Gastrocnemius medialis (tissue), 4 donors: ENCODE measurements at regions of chr3 and their contacts with region 1.

Region 1: DNA sequence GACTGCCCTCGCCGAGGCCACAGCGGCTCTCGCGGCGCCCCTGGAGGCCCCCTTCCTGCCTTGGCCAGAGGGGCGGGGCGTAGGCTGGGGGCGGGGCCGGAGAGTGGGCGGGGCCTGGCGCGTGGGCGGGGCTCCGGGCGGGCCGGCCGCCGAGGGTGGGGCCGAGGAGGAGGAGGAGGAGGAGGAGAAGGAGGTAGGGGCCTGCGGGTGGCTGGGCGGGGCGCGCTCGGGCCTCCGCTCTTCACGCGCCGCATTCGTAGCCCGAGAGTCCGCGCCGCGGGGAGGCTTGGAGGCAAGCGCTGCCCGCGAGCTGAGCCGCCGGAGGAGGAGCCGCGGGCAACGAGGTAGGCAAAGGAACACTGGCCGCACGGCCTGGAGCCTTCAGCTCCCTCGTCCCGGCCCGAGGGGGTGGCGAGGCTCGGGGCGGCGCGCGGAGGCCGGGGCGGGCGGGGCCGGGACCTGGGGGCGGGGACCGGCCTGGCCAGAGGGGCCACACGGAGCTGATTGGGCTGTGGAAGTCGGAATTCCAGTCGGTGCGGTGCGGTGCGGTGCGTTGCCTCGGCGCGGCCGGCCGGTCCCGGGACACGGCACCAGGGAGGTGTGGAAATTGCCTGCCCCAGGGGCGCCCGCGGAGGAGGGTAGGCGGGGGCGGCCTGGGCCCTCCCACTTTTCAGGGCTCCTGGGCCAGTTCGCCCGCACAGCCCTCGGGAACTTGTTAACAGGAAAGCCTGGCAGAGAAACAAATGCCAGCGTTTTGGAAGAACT is at the start of gene PPP2R3A:
- DNase-seq: peak; percentile 77 to 86
- ATAC-seq: peak; percentile 78 to 82
- H3K4me3 ChIP-seq: peak within 1 kb of the TSS; percentile 65 to 90 (median 85)
- H3K27ac ChIP-seq: peak within 1 kb of the TSS; percentile 82 to 98 (median 96)
- H3K4me1 ChIP-seq: peaks cover 39 to 51% of the 10 kb centered on the region in 2 donors
- H3K27me3 ChIP-seq: no peaks in the 10 kb centered on the region
- CTCF ChIP-seq: no peak
- POLR2A ChIP-seq: peak; percentile 79 to 80
- total RNA-seq, gene PPP2R3A: 16.8 to 30.3 (median 25.6) TPM

Region 2: GRCh38 chr3:135136361-135137100 is 829.2 kb before region 1 on chr3:
- in situ Hi-C with region 1: no loop called
- intact Hi-C with region 1: loop called (anchors 5 kb)
- DNase-seq: peak; percentile 80
- ATAC-seq: peak; percentile 98
- H3K4me3 ChIP-seq: no peak overlapping the region
- H3K27ac ChIP-seq: peak overlapping the region; percentile 78 to 88 (median 82)
- H3K4me1 ChIP-seq: peaks cover 29 to 31% of the 10 kb centered on the region in 2 donors
- H3K27me3 ChIP-seq: no peaks in the 10 kb centered on the region
- CTCF ChIP-seq: no peak
- POLR2A ChIP-seq: no peak

Region 3: DNA sequence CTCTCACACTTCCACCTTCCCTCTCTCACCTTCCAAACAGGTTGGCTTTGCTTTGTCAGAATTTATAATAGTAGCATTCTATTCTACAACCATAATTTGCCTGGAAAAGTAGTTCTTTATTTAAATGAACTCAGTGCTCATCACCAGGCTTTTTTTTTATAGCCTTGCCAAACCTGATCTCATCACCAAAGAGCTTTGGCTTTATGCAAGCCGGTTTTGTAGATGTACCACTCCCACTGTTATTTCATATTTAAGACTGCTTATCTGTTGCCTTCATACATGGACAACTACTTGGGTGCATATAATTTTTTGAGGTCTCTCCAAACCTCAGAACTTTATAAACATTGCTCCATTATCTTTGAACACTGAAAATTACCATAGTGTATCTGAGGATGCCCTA is 246.2 kb before region 1 on chr3:
- in situ Hi-C with region 1: no loop called
- intact Hi-C with region 1: no loop called
- DNase-seq: no peak
- ATAC-seq: no peak
- H3K4me3 ChIP-seq: no peak overlapping the region
- H3K27ac ChIP-seq: no peak overlapping the region
- H3K4me1 ChIP-seq: no peaks in the 10 kb centered on the region
- H3K27me3 ChIP-seq: no peaks in the 10 kb centered on the region
- CTCF ChIP-seq: no peak
- POLR2A ChIP-seq: no peak

Region 4: DNA sequence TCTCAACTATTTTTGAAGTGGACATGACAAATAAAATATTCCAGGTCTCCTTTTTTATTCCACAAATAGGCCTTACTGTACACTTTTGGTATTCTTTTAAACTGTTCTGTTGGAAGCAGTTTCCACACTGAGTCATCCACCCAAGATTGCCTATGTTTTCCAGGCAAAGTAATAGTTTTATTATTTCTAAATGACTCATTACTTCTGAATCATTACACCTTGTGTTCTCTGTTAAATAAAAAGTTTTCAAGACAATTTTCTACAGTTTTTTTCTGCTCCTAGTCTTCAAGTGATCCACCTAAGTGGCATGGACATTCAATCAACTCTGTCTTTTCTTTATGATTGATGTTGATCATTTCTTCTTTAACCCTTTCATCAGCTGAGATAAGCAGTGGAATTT is 26.4 kb after region 1 on chr3:
- in situ Hi-C with region 1: no loop called
- intact Hi-C with region 1: loop called (anchors 2 kb)
- DNase-seq: no peak
- ATAC-seq: peak in 1 of 2 donors; percentile 62
- H3K4me3 ChIP-seq: no peak overlapping the region
- H3K27ac ChIP-seq: peak overlapping the region; percentile 7 to 42 (median 40)
- H3K4me1 ChIP-seq: peaks cover 37 to 49% of the 10 kb centered on the region in 2 donors
- H3K27me3 ChIP-seq: no peaks in the 10 kb centered on the region
- CTCF ChIP-seq: no peak
- POLR2A ChIP-seq: no peak

Region 5: DNA sequence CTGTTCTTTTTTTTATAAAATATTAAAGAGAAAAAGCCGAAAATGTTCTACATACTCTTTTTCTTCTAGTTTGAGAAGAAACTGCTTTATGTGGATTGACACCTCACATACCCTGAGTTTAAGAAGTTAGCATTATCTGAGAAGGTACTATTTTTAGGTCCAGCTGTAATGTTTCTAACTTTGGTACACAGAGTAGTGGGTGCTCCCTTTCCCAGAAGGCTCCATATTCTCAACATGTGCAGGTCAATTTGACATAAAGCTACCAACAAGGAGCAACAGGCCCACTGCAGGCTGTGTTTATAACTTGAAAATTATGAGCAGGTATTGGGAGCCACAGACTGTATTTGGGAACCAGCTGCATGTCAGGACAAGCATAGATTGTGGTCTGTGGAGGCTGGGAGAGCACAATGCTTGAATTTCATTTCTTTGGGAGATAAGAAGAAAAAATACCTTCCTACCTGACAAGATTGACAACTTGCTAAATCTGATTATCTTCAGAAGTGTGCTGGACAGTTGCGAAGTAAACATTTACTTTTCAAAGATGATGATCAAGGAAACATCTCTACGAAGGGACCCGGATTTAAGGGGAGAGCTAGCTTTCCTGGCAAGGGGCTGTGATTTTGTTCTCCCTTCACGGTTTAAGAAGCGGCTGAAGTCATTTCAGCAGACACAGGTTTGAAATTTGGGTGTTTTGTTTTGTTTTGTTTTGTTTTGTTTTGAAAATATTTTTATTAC is 57.0 kb after region 1 on chr3:
- in situ Hi-C with region 1: no loop called
- intact Hi-C with region 1: loop called (anchors 2 kb)
- DNase-seq: no peak
- ATAC-seq: peak; percentile 65 to 82
- H3K4me3 ChIP-seq: peak overlapping the region; percentile 37 to 49 (median 48)
- H3K27ac ChIP-seq: peak overlapping the region; percentile 78 to 86 (median 82)
- H3K4me1 ChIP-seq: peaks cover 72 to 73% of the 10 kb centered on the region in 2 donors
- H3K27me3 ChIP-seq: no peaks in the 10 kb centered on the region
- CTCF ChIP-seq: no peak
- POLR2A ChIP-seq: no peak

Region 6: DNA sequence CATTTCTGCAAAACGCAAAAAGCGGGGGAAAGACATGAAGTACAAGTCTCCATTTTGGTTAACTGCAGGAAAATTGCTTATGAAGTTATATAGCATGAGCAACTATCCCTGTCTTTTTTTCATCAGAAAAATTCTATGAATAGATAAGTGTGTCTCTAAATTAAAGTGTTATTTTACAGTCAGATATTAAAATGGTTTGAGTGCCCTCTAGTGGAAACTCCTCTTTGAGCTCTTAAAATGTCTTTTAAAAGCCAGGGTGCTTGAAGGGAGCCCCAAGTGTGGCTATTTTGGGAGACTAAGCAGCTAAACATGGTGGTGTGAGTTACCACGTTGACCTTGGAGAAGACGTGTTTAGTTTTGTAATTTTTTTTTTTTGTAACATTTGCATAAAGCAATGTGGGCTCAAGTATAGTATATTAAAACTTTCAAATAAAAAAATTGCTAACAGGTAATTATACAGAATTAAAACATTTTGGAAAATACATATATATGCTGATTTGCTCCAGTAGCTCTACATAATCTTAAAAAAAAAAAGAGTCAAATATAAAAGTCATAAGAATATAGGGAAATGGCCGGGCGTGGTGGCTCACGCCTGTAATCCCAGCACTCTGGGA is 77.0 kb after region 1 on chr3:
- in situ Hi-C with region 1: no loop called
- intact Hi-C with region 1: loop called (anchors 5 kb)
- DNase-seq: no peak
- ATAC-seq: peak; percentile 54 to 59
- H3K4me3 ChIP-seq: no peak overlapping the region
- H3K27ac ChIP-seq: peak overlapping the region in 2 of 4 donors; percentile 18 to 67
- H3K4me1 ChIP-seq: peaks cover 11 to 24% of the 10 kb centered on the region in 2 donors
- H3K27me3 ChIP-seq: no peaks in the 10 kb centered on the region
- CTCF ChIP-seq: peak; percentile 54 to 69 (median 65)
- POLR2A ChIP-seq: no peak

Region 7: DNA sequence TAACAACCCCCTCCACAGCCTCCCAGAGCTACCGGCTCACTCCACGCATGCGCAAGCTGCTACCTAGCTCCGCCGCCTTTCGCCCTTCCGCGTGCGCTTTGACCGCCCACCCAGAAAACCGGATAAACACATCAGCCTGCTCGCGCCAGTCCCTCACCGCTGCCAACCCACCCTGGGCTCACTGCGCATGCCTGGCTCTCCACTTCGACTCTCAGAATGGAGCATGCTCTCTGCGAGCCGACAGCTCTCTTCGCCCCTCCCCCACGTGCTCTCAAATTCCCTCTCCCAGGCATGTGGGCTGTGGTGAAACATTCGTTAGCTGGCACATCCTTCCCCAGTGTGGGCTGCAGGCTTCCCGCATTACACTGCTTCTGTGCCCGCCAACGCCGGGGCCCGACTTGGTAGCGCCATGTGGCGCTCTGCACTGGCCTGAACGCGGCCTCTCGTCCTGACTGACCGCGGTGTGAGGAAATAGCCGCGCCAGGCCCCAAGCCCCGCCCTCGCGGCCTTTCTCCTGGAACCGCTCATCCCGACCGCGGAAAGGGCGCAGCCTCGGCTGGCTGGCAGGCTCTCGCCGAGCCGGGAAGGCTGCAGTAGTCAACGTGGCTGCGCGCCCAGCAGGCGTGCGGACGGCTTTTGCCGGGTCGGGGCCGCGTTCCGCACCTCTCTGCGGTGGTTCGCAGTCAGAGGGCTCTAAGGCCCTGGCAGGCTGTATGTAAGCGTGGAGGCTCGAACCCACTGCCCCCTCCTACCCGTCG is 230.9 kb after region 1 on chr3:
- in situ Hi-C with region 1: no loop called
- intact Hi-C with region 1: loop called (anchors 5 kb)
- DNase-seq: peak; percentile 97 to 99
- ATAC-seq: peak; percentile 78 to 84
- H3K4me3 ChIP-seq: peak overlapping the region; percentile 84 to 95 (median 92)
- H3K27ac ChIP-seq: peak overlapping the region; percentile 91 to 100 (median 100)
- H3K4me1 ChIP-seq: peaks cover 32 to 38% of the 10 kb centered on the region in 2 donors
- H3K27me3 ChIP-seq: no peaks in the 10 kb centered on the region
- CTCF ChIP-seq: no peak
- POLR2A ChIP-seq: peak; percentile 69 to 80